Gastrocnemius medialis (tissue), 4 donors: ENCODE measurements at regions of chr11 and their contacts with region 1.

Region 1: DNA sequence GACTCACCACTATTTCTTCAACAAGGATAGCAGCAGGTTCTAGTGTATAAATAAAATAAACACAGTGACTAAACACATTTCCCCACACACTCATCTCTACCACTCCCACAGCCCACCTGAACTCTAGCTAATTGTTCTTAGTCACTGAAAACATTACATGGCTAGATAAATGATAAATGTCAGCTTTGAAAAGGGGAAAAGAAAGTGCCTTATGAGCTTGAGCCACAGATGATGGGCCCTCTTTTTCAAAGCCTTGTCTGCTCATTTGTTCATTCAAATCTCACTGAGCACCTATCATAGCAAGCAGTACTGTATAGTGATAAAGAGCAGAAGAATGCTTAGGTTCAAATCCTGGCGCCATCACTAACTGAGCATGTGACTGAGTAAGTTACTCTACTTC is 58.3 kb downstream of the SIK3 start:
- DNase-seq: no peak
- ATAC-seq: no peak
- H3K4me3 ChIP-seq: no peak overlapping the region
- H3K27ac ChIP-seq: no peak overlapping the region
- H3K4me1 ChIP-seq: peaks cover 60 to 62% of the 10 kb centered on the region in 2 donors
- H3K27me3 ChIP-seq: no peaks in the 10 kb centered on the region
- CTCF ChIP-seq: no peak
- POLR2A ChIP-seq: no peak

Region 2: DNA sequence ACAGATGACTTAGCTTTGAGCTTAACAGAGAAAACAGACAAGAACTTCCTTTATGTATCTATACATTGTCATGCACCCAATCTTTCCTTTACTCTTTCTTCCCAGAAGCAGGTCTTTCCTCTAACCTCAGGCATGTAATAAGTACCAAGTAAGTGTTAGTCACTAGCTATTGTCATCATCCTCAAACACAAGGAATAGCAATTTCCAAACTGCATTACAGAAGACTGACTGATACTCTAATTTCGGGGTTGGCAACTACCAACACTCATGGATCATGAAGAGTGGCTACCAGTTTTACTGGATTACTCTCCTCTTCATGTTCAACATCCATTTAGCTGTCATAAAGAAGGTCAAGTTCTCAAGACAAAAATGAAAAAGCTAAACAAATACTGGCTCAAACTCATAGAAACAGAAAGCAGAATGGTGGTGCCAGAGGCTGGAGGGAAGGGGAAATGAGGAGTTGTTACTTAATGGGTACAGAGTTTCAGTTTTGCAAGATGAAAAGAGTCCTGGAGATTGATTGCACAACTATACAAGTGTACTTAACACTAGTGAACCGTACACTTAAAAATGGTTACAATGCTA is 53.3 kb before region 1 on chr11:
- in situ Hi-C with region 1: no loop called
- intact Hi-C with region 1: loop called (anchors 5 kb)
- DNase-seq: peak in 1 of 2 donors; percentile 27
- ATAC-seq: peak; percentile 89 to 93
- H3K4me3 ChIP-seq: no peak overlapping the region
- H3K27ac ChIP-seq: peak overlapping the region; percentile 51 to 66 (median 60)
- H3K4me1 ChIP-seq: peaks cover 51 to 68% of the 10 kb centered on the region in 2 donors
- H3K27me3 ChIP-seq: no peaks in the 10 kb centered on the region
- CTCF ChIP-seq: no peak
- POLR2A ChIP-seq: no peak

Region 3: GRCh38 chr11:117199061-117199915 is 159.4 kb after region 1 on chr11 and contains the start of gene TAGLN:
- in situ Hi-C with region 1: no loop called
- intact Hi-C with region 1: no loop called
- DNase-seq: peak in 1 of 2 donors; percentile 73
- ATAC-seq: peak; percentile 46 to 52
- H3K4me3 ChIP-seq: peak within 1 kb of the TSS; percentile 40 to 57 (median 44)
- H3K27ac ChIP-seq: peak within 1 kb of the TSS; percentile 74 to 78 (median 76)
- H3K4me1 ChIP-seq: peaks cover 17 to 20% of the 10 kb centered on the region in 2 donors
- H3K27me3 ChIP-seq: no peaks in the 10 kb centered on the region
- CTCF ChIP-seq: no peak
- POLR2A ChIP-seq: peak in 1 of 2 donors; percentile 47
- total RNA-seq, gene TAGLN: 27.4 to 191 (median 124) TPM